ENCODE measurements at regions of chr11 and their contacts with region 1.

Region 1: DNA sequence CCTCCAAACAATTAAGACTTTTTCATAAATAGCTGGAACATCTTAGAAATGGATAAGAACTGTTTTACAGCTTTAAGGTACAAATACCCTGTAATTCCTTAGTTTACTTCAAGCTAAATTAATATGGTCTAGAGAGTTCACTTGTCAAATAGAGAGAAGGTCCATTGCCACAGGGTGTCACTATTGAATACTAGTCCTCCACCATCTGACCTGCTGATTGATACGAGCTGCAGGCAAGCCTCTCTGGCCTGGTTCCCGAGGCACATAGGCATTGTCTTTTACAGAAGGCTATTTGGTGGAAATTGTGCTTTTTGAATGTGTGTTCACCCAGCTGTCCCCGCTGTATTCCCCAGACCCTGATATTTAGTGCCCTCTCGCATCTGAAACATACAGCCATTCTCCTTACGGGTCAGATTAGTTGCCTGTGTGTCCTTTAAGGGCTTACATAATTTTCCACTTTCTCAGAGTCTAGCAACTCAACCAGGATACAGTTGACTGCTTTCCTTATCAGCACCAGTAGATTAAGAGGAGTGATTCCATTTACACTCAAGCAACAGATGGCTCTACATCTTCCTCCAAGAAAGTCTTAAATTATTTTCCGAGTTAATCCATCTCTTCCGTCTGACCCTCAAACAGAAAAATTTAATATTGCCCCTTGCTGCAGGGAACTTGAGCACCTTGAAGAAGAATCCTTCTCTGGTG is 788.8 kb upstream of the FAT3 start:
- DNase-seq: no peak
- H3K4me3 ChIP-seq: no peak overlapping the region
- H3K27ac ChIP-seq: no peak overlapping the region
- H3K4me1 ChIP-seq: no peaks in the 10 kb centered on the region
- H3K27me3 ChIP-seq: no peaks in the 10 kb centered on the region

Region 2: DNA sequence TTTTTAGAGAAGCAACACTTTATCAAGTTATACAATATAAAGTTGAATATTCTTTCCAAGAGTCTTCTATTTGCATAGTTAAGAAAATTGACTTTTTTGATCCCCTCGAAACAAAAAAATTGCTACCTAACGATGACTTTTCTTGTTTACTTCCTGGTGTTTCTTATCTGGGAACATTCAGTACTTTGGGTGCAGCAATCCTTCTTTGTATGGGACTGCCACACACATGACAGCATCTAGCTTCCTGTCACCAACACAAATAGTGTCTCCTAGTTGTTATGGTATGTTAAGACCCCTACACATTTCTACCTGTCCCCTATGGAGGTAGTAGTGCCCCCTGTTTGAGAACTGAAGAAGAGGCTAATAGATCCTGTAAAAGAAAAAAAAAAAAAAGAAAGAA is 52.9 kb before region 1 on chr11:
- in situ Hi-C with region 1: no loop called
- DNase-seq: no peak
- H3K4me3 ChIP-seq: no peak overlapping the region
- H3K27ac ChIP-seq: no peak overlapping the region
- H3K4me1 ChIP-seq: no peaks in the 10 kb centered on the region
- H3K27me3 ChIP-seq: no peaks in the 10 kb centered on the region

Region 3: DNA sequence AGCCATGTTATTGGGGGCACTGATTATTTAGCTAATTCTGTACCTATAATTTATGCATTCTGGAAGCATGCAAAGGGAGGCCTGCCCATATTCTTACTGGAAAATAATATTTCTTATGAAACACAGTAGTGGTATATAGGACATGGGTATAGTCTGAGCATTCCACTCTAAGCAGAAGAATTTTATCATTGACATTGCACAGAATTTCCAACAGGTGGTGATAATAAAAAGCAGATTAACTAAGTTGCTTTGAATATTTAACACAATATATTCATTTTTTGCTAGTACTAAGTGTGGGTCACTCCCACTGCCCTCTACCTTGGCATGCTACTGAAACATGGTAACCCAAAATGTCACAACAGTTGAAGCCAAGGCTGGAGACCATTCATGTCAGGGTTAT is 60.0 kb after region 1 on chr11:
- in situ Hi-C with region 1: loop called (anchors 10 kb)
- DNase-seq: no peak
- H3K4me3 ChIP-seq: no peak overlapping the region
- H3K27ac ChIP-seq: no peak overlapping the region
- H3K4me1 ChIP-seq: no peaks in the 10 kb centered on the region
- H3K27me3 ChIP-seq: no peaks in the 10 kb centered on the region

Region 4: DNA sequence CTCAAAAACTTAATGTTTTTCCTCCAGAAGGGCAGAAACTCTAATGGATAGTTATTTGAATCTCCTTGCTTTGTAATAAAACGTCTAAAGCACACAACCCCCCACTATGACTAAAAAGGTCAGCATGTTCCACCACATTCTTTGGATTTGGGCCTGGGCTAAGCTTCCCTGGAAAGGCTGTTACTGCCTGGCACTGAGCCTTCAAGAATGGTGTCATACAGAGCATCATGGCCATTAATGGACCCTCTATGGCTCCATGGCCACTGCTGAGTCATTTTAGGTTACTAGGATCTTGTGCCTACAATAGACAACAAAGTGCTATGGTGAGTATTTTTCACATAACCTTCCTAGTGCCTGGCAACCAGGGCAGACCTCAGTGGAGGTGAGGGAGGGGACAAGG is 546.1 kb after region 1 on chr11:
- in situ Hi-C with region 1: no loop called
- DNase-seq: peak; percentile 95
- H3K4me3 ChIP-seq: peak overlapping the region; percentile 24; the same call in 1 of the 2 replicates
- H3K27ac ChIP-seq: peak overlapping the region; percentile 95
- H3K4me1 ChIP-seq: peaks cover 28% of the 10 kb centered on the region
- H3K27me3 ChIP-seq: no peaks in the 10 kb centered on the region